Esophagus squamous epithelium (tissue), 5 donors: ENCODE measurements at regions of chr20 and their contacts with region 1.

Region 1: DNA sequence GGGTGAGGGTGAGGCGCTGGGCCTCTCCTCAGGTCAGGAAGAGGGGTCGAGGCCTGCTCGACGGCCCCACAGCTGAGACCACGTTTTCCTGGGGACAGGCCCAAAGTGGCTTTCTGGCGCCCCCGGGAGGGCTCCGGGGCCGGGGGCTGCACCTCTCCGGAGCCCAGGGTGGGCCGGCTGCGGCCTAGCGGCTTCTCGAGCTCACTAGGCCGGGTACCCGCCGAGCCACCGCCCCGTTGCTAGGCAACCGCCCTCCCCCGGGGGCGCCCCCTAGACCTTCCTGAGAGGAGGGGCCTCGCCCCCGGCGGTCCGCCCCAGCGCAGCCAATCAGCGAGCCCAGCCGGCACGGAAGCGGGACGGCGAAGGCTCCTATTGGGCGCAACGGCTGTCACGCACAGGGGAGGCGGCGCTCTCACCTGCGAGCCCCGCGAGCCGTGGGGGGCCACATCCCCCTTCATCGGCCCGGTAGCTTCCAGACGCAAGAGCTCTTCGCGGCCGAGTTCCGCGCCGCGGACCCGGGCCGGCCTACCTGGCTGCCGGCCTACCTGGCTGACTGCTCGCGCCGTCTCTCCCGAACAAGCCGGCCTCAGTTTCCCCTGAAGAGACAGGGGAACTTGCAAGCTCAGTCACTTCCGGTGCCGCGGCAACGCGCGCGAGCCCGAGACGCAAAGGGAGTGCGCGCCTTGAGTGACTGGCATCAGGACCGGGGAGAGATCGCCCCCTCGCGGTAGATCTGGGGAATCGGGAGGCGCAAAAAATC is 831 bp upstream of the BCL2L1 start:
- DNase-seq: peak; percentile 90
- H3K4me3 ChIP-seq: peak overlapping the region; percentile 68 to 90 (median 80)
- H3K27ac ChIP-seq: peak overlapping the region; percentile 97 to 98 (median 98)
- H3K4me1 ChIP-seq: peaks cover 31 to 46% (median 33%) of the 10 kb centered on the region in 3 donors
- H3K27me3 ChIP-seq: no peaks in the 10 kb centered on the region
- CTCF ChIP-seq: peak; percentile 96 to 99 (median 99)
- POLR2A ChIP-seq: peak in 2 of 4 donors; percentile 57 to 73

Region 2: DNA sequence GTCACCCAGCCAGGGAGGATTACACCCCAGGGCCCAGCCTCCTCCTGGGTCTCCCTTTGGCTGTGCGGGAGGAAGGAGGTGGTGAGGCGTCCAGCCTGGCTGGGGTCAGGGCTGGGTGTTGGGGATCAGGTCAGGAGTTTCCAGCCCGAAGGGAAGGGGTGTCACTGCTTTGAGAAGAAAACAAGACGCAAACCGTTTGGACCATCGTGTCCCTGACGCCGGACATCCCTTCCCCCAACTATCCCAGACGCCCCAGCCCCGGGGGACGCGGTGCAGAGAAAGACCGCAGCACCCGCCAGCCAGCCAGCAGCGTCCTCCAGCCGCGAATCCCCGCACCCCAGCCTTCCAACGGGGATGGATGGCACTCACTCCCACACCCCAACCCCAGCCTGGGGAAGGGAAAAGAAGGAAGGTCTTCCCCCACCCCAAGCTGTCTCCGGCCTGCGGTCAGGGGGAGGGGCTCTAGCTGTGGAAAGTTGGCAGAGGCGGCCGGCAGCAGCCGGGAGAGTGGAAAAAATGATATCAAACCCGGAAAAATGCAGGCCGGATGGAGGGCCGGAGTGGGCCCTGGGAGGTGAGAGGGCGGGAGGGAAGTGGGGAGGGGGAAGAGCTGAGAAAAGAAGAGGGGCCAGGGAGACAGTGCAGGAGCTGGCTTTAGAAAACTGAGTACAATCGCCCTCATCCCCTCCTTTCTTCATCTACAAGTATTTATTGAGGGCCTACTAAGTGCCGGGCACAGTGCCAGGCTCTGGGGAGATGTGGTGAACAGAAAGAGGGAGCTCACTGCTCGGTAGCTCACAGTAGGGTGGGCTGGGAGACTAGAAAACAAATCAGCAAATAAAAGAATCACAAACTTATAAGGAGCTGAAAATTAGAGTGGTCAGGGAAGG is 237.8 kb before region 1 on chr20:
- intact Hi-C with region 1: no loop called
- DNase-seq: no peak
- H3K4me3 ChIP-seq: peak overlapping the region in 3 of 4 donors; percentile 18 to 53 (median 22)
- H3K27ac ChIP-seq: peak overlapping the region; percentile 58 to 82 (median 72)
- H3K4me1 ChIP-seq: peaks cover 0 to 26% (median 0%) of the 10 kb centered on the region in 3 donors
- H3K27me3 ChIP-seq: peaks cover 0 to 23% (median 0%) of the 10 kb centered on the region in 4 donors
- CTCF ChIP-seq: no peak
- POLR2A ChIP-seq: no peak

Region 3: GRCh38 chr20:31560094-31560899 is 163.2 kb before region 1 on chr20:
- intact Hi-C with region 1: loop called (anchors 10 kb)
- DNase-seq: peak; percentile 17
- H3K4me3 ChIP-seq: no peak overlapping the region
- H3K27ac ChIP-seq: peak overlapping the region; percentile 80 to 94 (median 89)
- H3K4me1 ChIP-seq: peaks cover 19 to 58% (median 27%) of the 10 kb centered on the region in 3 donors
- H3K27me3 ChIP-seq: no peaks in the 10 kb centered on the region
- CTCF ChIP-seq: peak; percentile 68 to 97 (median 84)
- POLR2A ChIP-seq: no peak

Region 4: DNA sequence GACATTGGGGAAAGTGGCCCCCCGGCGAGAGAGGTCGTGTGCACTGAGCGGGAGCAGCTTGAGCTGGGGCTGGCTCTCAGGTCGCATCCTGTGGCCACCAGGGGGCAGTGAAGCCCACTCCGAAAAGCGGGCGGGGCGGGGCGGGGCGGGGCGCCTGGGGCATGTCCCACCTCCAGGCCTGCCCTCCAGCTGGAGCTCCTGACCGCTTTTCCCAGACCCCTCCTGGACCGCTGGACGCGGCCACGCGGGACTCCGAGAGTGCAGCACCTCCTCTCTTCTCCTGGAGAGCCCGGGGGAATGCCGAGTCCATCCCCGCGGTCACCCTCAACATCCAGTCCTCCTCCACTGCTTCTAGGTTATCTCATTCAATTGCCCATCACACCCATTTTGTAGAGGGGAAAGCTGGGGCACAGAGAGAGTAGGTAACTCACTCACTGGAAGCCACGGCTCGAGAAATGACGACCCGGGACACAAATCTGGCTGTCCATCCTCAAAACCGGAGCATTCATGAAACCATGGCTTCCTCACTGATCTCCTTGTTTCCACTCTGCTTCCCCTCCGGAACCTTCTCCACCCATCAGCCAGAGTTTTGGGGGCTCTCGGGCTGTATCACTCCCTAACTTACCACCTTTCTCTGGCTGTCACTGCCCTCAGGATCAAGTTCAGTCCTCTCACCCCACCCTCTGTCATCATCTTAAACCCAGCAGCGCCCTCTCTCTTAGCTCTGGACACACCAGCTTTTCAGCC is 61.7 kb before region 1 on chr20:
- intact Hi-C with region 1: loop called (anchors 5 kb)
- DNase-seq: no peak
- H3K4me3 ChIP-seq: peak overlapping the region; percentile 10 to 62 (median 40)
- H3K27ac ChIP-seq: peak overlapping the region; percentile 68 to 82 (median 80)
- H3K4me1 ChIP-seq: peaks cover 26 to 55% (median 38%) of the 10 kb centered on the region in 3 donors
- H3K27me3 ChIP-seq: no peaks in the 10 kb centered on the region
- CTCF ChIP-seq: peak; percentile 53 to 91 (median 74)
- POLR2A ChIP-seq: peak in 1 of 4 donors; percentile 38